Right ventricle myocardium superior (tissue), 1 donor: ENCODE measurements at regions of chr3 and their contacts with region 1.

Region 1: DNA sequence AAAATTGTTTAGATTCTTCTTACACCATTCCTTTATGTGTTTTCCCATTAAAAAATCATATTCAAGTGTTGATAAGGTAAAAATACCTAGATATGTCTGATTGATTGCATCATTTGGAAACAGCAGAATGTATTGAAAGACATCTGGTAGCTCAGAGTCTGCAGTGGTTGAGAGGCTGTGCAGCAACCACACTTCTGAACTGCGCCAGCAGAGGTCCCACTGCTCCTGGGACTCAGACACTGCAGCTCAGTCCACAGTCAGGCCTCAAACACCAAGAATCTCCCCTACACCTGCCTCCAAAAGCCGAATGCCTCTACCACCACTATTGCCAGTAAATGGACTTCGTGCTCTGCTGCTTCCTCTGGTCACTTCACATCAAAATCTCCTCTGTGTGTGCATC is 176.9 kb upstream of the LMCD1 start:
- DNase-seq: peak; percentile 54
- ATAC-seq: peak; percentile 79

Region 2: GRCh38 chr3:8416965-8417364 is 92.2 kb after region 1 on chr3:
- intact Hi-C with region 1: loop called (anchors 5 kb)
- DNase-seq: no peak
- ATAC-seq: peak; percentile 57